ENCODE measurements at regions of chr7 and their contacts with region 1.

Region 1: GRCh38 chr7:100803398-100804233 is 23.7 kb downstream of the EPHB4 start:
- DNase-seq: peak; percentile 67 to 91 (median 89)
- H3K4me3 ChIP-seq: no peak overlapping the region
- H3K27ac ChIP-seq: no peak overlapping the region
- H3K4me1 ChIP-seq: peaks cover 0 to 2% (median 0%) of the 10 kb centered on the region in 3 donors
- H3K27me3 ChIP-seq: no peaks in the 10 kb centered on the region
- CTCF ChIP-seq: no peak

Region 2: DNA sequence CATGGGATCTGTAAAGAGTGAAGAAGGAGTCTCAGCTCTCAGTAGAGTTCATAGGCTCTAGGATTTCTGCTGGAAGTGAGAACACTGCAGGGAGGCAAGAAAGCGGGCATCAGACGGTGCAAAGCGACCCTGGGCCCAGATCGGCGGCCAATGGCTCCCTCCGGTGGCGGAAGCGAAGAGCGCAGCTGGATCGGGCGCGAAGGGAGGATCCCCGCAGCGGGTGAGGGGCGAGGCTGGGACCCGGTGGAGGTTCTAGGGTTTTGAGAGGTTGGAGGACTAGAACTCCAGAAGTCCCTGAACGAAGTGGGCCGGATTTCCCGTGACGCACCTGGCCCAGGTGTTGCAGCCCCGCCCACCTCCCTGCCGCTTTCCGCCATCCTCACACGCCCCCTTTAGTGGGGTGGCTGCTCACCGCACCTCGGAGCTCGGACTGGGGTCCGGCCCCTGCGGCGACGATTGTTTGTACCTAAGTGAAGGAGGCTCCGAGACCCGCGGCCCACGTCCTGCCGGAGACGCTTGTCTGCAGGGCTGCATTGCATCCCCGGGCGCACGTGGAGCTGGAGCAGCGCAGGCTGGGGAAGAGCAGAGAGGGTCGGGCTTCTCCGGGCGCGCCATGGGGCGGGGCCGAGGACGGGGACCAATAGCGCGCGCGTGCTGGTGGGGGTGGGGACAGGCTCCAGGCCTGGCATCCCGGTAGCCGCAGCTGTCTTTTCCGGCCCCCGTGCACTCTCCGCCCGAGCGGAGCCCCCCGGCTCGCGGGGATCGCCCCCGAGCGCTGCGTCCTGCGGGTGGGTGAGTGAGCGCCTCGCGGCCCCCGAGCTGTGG is 48.6 kb after region 1 on chr7 and contains the start of gene SLC12A9:
- intact Hi-C with region 1: loop called (anchors 10 kb)
- DNase-seq: peak; percentile 91 to 97 (median 94)
- H3K4me3 ChIP-seq: peak within 1 kb of the TSS; percentile 41 to 69 (median 67)
- H3K27ac ChIP-seq: no peak within 1 kb of the TSS
- H3K4me1 ChIP-seq: peaks cover 0 to 9% (median 0%) of the 10 kb centered on the region in 3 donors
- H3K27me3 ChIP-seq: no peaks in the 10 kb centered on the region
- CTCF ChIP-seq: peak; percentile 94
- total RNA-seq, gene SLC12A9: 29.9 TPM

Region 3: DNA sequence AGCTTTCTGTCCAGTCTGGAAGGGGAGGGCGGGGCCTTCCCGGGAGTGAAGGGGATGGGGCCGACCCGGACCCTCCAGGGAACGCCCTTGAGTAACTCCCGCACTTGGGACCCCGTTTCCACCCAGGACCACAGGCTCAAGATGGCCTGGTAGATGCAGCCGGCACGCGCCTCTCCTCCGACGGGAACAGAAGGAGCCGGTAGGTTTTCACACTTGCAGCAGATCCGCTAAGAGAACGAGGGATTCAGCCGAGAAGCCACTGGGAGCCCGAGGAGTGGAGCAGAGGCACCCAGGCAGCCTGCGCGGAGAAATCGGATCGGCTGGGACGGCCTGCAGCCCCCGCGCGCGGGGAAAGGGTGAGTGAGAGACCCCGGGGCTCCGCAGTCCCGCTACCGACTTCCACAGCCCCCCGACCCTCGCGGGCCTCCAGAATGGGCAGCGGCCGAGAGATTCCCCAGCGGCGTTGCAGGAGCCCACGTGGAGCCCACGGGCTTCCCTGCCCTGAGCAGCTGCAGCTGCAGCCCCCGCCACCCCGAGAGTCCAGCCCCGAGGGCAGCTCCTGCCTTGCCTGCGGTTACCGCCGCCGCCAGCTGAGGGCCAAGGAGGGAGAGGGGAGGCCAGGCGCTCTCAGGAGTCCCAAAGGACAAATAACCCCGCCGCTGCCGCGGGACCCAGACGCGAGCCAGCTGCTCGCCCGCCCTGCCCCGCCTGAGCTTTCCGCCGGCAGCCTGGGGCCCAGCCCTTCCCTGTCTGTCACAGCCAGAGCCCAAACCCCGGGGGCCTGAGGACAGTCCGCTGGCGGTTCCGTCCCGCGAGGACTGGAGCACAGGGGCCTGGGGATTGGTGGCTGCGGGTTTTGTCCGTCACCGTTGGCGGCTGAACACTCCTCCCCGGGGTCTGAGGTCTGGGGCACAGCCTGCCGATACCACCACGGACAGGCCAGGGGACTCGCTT is 496.2 kb after region 1 on chr7:
- intact Hi-C with region 1: no loop called
- DNase-seq: peak in 3 of 5 donors; percentile 26 to 58 (median 51)
- H3K4me3 ChIP-seq: no peak overlapping the region
- H3K27ac ChIP-seq: no peak overlapping the region
- H3K4me1 ChIP-seq: no peaks in the 10 kb centered on the region
- H3K27me3 ChIP-seq: peaks cover 28% of the 10 kb centered on the region
- CTCF ChIP-seq: no peak

Measured in kidney (tissue), 22 donors.